ENCODE measurements at regions of chr11 and their contacts with region 1.

Region 1: DNA sequence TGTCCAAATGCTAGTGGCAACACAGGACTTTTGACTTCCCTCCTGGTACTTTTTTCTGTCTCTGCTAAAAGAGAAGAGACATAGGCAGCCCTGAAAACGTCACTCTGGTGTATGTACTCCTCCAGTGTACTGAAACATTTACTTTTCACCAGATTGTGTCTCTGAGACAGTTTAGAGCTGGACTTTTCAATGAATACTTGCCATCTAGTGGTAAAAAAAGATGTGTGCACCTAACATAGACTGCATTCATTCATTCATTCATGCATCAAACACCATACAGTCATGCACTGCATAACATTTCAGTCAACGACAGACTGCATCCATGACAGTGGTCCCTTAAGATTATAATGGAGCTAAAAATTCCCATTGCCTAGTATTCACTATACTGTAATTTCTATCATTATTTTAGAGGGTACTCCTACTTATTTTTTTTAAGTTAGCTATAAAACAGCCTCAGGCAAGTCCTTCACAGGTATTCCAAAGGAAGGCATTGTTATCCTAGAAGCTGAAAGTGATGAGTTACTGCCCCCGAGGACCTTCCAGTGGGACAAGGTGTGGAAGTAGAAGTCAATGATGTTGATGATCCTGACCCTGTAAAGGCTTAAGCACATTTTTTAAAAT is 186.2 kb downstream of the SPON1 start:
- DNase-seq: peak in 1 of 2 experiments; percentile 34
- H3K4me3 ChIP-seq: no peak overlapping the region
- H3K4me3 Mint-ChIP-seq: no peak overlapping the region
- H3K27ac Mint-ChIP-seq: no peak overlapping the region
- H3K4me1 ChIP-seq: no peaks in the 10 kb centered on the region
- H3K4me1 Mint-ChIP-seq: peaks cover 6% of the 10 kb centered on the region
- H3K27me3 ChIP-seq: no peaks in the 10 kb centered on the region
- H3K27me3 Mint-ChIP-seq: no peaks in the 10 kb centered on the region
- CTCF ChIP-seq: peak; percentile 63 to 65

Region 2: DNA sequence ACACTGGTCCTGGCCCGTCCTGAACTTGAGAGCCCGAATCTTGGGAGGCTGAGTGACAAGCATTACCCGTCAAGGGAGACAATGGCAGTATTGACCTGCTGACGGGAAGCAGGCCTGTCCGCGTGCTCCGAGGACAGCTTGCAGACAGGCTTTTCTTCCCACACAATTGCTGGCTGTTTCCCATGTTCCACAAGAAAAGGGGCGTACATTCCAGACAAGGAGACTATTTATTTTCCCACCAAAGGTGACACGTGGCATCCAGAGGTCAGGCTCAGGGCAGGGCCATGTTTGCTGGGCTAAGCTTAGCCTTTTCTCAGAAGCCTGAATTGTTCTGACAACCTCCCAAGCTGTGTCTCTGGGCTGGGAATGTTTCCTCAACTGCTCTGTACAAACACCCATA is 273.1 kb before region 1 on chr11:
- CTCF ChIA-PET with region 1: interaction called, 9 read pairs
- POLR2A ChIA-PET with region 1: no interaction called
- intact Hi-C with region 1: loop called (anchors 10 kb)
- DNase-seq: peak; percentile 44 to 64
- H3K4me3 ChIP-seq: no peak overlapping the region
- H3K4me3 Mint-ChIP-seq: no peak overlapping the region
- H3K27ac Mint-ChIP-seq: no peak overlapping the region
- H3K4me1 ChIP-seq: peaks cover 9% of the 10 kb centered on the region; the same call in 1 of the 2 replicates
- H3K4me1 Mint-ChIP-seq: no peaks in the 10 kb centered on the region
- H3K27me3 ChIP-seq: no peaks in the 10 kb centered on the region
- H3K27me3 Mint-ChIP-seq: peaks cover 12% of the 10 kb centered on the region
- CTCF ChIP-seq: no peak

Region 3: DNA sequence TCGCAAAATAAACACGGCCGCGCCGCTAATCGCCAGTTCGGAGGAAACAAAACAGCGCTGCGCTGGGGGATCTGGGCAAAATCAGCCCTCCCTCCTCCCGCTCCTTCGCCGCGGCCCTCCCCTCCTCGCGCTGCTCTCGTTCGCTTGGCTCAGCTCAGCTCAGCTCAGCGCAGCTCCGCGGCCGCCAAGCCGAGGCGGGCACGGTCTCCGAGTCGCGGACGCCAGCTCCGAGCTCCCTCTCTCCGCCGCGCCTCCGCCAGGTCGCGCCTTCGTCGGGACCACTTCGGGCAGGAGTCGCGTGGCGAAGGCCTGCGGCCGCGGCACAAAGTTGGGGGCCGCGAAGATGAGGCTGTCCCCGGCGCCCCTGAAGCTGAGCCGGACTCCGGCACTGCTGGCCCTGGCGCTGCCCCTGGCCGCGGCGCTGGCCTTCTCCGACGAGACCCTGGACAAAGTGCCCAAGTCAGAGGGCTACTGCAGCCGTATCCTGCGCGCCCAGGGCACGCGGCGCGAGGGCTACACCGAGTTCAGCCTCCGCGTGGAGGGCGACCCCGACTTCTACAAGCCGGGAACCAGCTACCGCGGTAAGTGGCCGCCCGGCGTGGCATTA is 186.1 kb before region 1 on chr11 and contains the start of gene SPON1:
- CTCF ChIA-PET with region 1: interaction called, 15 read pairs
- POLR2A ChIA-PET with region 1: no interaction called
- intact Hi-C with region 1: loop called (anchors 1 kb)
- DNase-seq: peak; percentile 70 to 76
- H3K4me3 ChIP-seq: peak within 1 kb of the TSS; percentile 94
- H3K4me3 Mint-ChIP-seq: peak within 1 kb of the TSS; percentile 75
- H3K27ac Mint-ChIP-seq: peak within 1 kb of the TSS; percentile 76
- H3K4me1 ChIP-seq: peaks cover 35% of the 10 kb centered on the region
- H3K4me1 Mint-ChIP-seq: peaks cover 22% of the 10 kb centered on the region
- H3K27me3 ChIP-seq: no peaks in the 10 kb centered on the region
- H3K27me3 Mint-ChIP-seq: peaks cover 5% of the 10 kb centered on the region
- CTCF ChIP-seq: no peak
- total RNA-seq, gene SPON1: 41.4 and 46.9 TPM in 2 replicates

Region 4: DNA sequence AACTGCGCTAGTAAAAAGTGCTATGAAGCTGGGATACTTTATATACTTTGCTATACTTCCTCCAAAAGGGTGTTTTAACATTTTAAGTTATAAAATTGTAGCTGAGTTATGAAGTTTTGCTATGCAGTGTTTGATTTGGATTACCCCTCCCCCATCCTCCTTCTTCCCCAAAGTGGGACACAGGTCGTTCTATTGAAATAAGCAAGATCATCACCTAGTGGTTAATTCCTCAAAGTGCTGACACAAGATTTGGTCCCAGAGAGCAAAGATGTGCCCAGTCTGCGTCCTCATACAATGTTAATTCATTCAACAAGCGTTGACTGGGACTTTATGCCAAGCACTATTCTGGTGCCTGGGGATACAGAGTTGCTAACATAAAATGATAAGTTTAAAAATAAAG is 107.7 kb before region 1 on chr11:
- CTCF ChIA-PET with region 1: no interaction called
- POLR2A ChIA-PET with region 1: no interaction called
- intact Hi-C with region 1: loop called (anchors 1 kb)
- DNase-seq: peak in 1 of 2 experiments; percentile 34
- H3K4me3 ChIP-seq: no peak overlapping the region
- H3K4me3 Mint-ChIP-seq: no peak overlapping the region
- H3K27ac Mint-ChIP-seq: no peak overlapping the region
- H3K4me1 ChIP-seq: peaks cover 15% of the 10 kb centered on the region
- H3K4me1 Mint-ChIP-seq: no peaks in the 10 kb centered on the region
- H3K27me3 ChIP-seq: no peaks in the 10 kb centered on the region
- H3K27me3 Mint-ChIP-seq: no peaks in the 10 kb centered on the region
- CTCF ChIP-seq: peak; percentile 43 to 67

Measured in Caco-2 (cell line).